Breast epithelium (tissue), 4 donors: ENCODE measurements at regions of chr15 and their contacts with region 1.

Region 1: DNA sequence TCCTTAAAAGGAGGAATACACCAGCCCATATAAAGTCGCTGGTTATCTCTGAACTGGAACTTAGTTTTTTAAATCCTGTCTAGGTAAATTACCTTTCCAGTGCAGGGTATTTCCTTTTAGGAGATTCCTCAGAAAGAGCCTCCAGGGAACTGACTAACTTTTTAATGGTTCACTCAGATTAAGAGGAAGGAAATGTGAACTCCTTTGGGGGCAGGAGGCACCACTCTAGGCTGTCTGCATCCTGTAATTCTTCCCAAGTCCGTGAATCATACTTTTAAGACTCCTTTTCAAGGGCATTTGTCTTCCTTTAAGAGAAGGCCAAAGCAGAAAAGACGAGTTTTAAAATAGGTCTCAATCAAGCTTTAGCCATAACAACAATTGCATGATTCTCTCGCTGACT is 871.2 kb upstream of the NR2F2 start:
- DNase-seq: no peak
- H3K4me3 ChIP-seq: no peak overlapping the region
- H3K27ac ChIP-seq: peak overlapping the region in 1 of 2 donors; percentile 41
- H3K4me1 ChIP-seq: no peaks in the 10 kb centered on the region
- H3K27me3 ChIP-seq: no peaks in the 10 kb centered on the region
- CTCF ChIP-seq: no peak
- POLR2A ChIP-seq: no peak

Region 2: GRCh38 chr15:95439922-95440376 is 19.3 kb before region 1 on chr15:
- intact Hi-C with region 1: loop called (anchors 1 kb)
- DNase-seq: no peak
- H3K4me3 ChIP-seq: no peak overlapping the region
- H3K27ac ChIP-seq: peak overlapping the region in 1 of 2 donors; percentile 74
- H3K4me1 ChIP-seq: no peaks in the 10 kb centered on the region
- H3K27me3 ChIP-seq: no peaks in the 10 kb centered on the region
- CTCF ChIP-seq: no peak
- POLR2A ChIP-seq: no peak